BJ (cell line): ENCODE measurements at regions of chr5 and their contacts with region 1.

Region 1: DNA sequence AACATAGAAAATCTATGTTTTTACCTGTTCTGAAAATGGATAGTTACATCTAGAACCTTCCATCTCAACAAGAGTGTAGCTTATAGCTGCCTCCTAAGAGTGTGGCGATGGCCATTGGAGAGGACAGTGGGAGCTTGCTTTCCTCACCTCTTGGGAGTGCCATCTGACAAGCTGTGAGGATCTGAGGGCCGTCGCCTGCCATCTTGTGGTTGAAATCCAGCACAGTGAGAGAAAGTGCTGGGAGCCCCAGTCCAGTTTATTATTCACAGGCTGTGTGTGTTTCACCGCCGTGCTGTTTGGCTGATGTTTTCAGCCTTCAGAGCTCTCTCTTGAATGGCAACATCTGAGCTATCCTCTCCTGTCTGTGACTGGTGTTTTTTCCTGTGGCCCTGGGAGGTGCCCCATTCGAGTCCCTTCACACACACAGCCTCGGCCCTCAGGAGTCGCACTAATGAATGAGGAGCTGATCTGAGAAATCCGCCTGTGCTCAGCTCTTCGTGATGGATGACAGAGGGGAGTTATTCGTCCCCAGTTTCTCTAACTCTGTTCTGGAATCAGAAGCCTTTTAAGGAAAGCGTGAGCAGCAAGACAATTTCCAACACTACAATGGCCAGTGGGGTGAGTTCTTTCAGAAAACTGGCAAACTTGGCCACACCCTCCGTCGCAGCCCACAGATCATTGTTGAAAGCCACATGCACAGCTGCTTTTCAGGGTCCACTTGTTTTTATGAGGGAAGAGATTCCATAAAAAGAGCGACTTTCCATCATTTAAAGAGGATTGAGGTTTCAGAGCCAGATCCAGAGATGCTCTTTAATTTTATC is 170.3 kb downstream of the PDZD2 start:
- DNase-seq: no peak
- H3K4me3 ChIP-seq: no peak overlapping the region
- H3K27me3 ChIP-seq: peaks cover 7% of the 10 kb centered on the region
- CTCF ChIP-seq: peak; percentile 73

Region 2: DNA sequence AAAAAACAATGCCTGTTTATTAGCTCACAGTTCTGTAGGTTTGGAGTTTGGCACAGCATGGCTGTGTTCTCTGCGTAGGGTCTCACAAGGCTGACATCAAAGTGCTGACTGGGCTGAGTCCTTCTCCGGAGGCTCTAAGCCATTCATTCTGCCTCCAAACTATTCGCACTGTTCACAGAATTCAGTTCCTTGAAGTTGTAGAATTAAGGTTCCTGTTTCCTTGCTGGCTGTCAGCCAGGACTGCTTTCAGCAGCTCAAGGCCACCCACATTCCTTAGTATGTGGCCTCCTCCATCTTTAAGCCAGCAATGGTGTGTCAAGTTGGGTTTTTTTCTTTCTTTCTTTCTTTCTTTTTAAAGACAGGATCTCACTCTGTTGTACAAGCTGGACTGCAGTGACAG is 453.9 kb before region 1 on chr5:
- CTCF ChIA-PET with region 1: no interaction called
- POLR2A ChIA-PET with region 1: no interaction called
- DNase-seq: no peak
- H3K4me3 ChIP-seq: no peak overlapping the region
- H3K27me3 ChIP-seq: no peaks in the 10 kb centered on the region
- CTCF ChIP-seq: no peak

Region 3: GRCh38 chr5:31421806-31422586 is 387.3 kb before region 1 on chr5:
- CTCF ChIA-PET with region 1: no interaction called
- POLR2A ChIA-PET with region 1: no interaction called
- DNase-seq: no peak
- H3K4me3 ChIP-seq: no peak overlapping the region
- H3K27me3 ChIP-seq: no peaks in the 10 kb centered on the region
- CTCF ChIP-seq: no peak

Region 4: DNA sequence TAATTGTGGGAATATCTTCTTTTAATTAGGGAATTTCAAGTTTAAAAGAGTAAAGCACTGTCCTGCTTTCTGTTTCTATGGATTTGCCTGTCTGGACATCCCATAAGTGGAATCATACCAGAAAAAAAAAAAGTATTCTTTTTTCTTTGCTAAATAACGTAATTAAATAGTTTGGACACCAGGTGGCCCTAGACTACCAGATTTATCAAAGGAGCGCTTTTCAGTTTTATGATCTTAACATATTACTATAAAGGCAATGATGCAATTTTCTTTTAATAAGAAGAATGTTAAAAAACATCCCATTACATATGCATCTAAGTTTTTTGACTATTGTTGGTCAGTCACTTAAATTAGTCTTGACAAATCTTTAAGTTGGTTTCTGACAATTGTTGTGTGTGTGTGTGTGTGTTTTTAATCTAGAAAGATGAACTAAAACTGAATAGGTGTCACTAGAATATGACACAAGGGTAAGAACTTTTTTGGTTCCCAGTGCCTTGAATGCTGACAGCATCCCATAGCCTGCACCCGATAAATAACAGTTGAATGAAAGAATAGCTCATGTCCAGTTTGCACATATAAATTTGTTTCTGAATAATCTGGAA is 227.7 kb before region 1 on chr5:
- CTCF ChIA-PET with region 1: interaction called, 12 read pairs
- POLR2A ChIA-PET with region 1: no interaction called
- DNase-seq: no peak
- H3K4me3 ChIP-seq: no peak overlapping the region
- H3K27me3 ChIP-seq: no peaks in the 10 kb centered on the region
- CTCF ChIP-seq: peak; percentile 40